A549 (cell line): ENCODE measurements at regions of chr14 and their contacts with region 1.

Region 1: GRCh38 chr14:65824285-65824977 is 411.9 kb downstream of the FUT8 start:
- DNase-seq: peak; percentile 58 to 69
- ATAC-seq: peak; percentile 72 to 90; a peak in 5 of 6 replicates
- H3K4me3 ChIP-seq: no peak overlapping the region
- H3K27ac ChIP-seq: no peak overlapping the region
- H3K4me1 ChIP-seq: no peaks in the 10 kb centered on the region
- CTCF ChIP-seq: peak; percentile 88
- EP300 ChIP-seq: no peak
- POLR2A ChIP-seq: no peak
- RAD21 ChIP-seq: peak; percentile 74 to 77

Region 2: GRCh38 chr14:65156568-65157366 is 667.7 kb before region 1 on chr14:
- CTCF ChIA-PET with region 1: interaction called, 85 read pairs
- POLR2A ChIA-PET with region 1: no interaction called
- DNase-seq: no peak
- ATAC-seq: no peak; a peak in 1 of 6 replicates
- H3K4me3 ChIP-seq: no peak overlapping the region
- H3K27ac ChIP-seq: no peak overlapping the region
- H3K4me1 ChIP-seq: no peaks in the 10 kb centered on the region
- CTCF ChIP-seq: no peak
- EP300 ChIP-seq: no peak
- POLR2A ChIP-seq: no peak
- RAD21 ChIP-seq: no peak

Region 3: DNA sequence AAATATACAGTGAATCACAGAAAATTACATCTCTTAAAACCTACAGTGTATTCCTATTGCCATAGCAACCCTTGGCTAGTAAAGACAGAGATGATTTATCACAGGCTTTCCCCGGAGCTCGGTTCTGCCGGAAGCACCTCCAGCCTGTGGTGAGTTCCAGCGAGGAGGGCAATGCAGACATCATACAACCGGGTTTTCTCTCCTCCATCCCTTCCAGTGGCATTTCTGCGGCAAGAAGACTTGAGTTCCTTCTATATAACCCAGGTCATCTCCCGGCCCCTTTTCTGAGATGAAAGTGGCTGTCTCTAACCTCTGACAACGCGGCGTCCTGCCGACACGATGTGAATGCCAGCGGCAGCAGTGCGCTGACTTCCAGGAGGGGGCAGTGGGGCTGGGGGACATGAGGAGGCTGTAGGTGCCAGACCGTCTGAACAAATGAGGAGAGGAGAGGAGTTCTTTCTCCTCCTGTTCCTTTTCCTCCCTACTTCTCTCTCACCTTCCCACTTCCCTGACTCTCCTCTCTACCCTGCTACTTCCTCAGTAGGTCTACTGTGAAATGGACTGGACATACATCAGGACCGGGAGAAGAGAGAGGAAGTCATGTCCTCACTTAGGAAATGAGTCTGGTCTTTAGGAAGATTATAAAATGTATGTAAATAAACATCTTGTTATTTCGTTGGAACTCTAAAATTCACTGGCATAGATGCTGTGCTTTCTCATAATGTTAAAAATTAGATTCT is 653.5 kb before region 1 on chr14:
- CTCF ChIA-PET with region 1: interaction called, 16 read pairs
- POLR2A ChIA-PET with region 1: no interaction called
- DNase-seq: peak; percentile 43 to 57
- ATAC-seq: peak; percentile 91 to 93
- H3K4me3 ChIP-seq: peak overlapping the region; percentile 42
- H3K27ac ChIP-seq: peak overlapping the region; percentile 65 to 67
- H3K4me1 ChIP-seq: peaks cover 4% of the 10 kb centered on the region; the same call in 1 of the 3 replicates
- CTCF ChIP-seq: peak; percentile 43
- EP300 ChIP-seq: no peak
- POLR2A ChIP-seq: no peak
- RAD21 ChIP-seq: peak; percentile 53 to 64

Region 4: DNA sequence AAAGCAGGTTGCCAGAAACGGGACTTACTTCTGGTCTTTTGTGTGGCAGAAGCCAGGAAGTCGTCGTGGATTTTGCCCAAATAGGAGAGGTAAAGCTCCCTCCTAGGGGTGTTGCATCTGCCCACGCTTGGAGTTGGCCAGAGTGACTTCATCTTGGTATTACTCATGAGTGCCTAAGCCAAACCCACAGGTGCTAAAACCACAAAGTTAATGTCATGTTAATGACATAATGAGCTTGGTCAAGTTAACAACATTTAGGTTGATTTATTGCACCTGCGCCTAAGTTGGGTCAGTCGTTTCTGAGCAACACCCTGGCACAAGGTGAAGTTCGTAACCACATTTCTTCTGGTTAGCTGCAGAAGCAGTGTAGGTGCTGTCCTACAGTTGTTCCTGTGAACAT is 186.7 kb before region 1 on chr14:
- CTCF ChIA-PET with region 1: no interaction called
- POLR2A ChIA-PET with region 1: no interaction called
- DNase-seq: no peak
- ATAC-seq: no peak
- H3K4me3 ChIP-seq: no peak overlapping the region
- H3K27ac ChIP-seq: no peak overlapping the region
- H3K4me1 ChIP-seq: 0 out of 3 replicates have a peak, but pooled peaks cover 5% of the 10 kb centered on the region
- CTCF ChIP-seq: no peak
- EP300 ChIP-seq: no peak
- POLR2A ChIP-seq: no peak
- RAD21 ChIP-seq: no peak

Region 5: DNA sequence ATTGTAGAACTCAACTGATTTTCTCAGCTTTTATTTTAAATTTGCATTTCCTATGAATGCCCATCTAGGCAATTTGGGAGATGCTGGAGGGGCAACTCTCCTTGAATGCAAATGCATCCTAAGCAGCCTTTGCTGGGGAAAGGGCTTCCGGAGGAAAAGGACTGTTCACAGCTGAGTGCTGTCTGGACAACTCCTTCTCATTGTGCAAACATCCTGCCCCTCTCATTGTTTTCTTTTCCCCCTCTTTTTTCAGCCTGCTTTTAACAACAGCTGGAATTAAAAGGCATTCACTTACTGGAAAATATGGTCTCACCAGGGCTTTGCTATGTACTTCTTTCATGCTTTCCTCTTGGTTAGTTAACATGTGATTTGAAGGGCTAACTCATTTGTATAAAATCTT is 14.1 kb before region 1 on chr14:
- CTCF ChIA-PET with region 1: interaction called, 18 read pairs
- POLR2A ChIA-PET with region 1: no interaction called
- DNase-seq: no peak
- ATAC-seq: no peak
- H3K4me3 ChIP-seq: no peak overlapping the region
- H3K27ac ChIP-seq: no peak overlapping the region
- H3K4me1 ChIP-seq: no peaks in the 10 kb centered on the region
- CTCF ChIP-seq: no peak
- EP300 ChIP-seq: no peak
- POLR2A ChIP-seq: no peak
- RAD21 ChIP-seq: no peak